ENCODE measurements at regions of chr6 and their contacts with region 1.

Region 1: DNA sequence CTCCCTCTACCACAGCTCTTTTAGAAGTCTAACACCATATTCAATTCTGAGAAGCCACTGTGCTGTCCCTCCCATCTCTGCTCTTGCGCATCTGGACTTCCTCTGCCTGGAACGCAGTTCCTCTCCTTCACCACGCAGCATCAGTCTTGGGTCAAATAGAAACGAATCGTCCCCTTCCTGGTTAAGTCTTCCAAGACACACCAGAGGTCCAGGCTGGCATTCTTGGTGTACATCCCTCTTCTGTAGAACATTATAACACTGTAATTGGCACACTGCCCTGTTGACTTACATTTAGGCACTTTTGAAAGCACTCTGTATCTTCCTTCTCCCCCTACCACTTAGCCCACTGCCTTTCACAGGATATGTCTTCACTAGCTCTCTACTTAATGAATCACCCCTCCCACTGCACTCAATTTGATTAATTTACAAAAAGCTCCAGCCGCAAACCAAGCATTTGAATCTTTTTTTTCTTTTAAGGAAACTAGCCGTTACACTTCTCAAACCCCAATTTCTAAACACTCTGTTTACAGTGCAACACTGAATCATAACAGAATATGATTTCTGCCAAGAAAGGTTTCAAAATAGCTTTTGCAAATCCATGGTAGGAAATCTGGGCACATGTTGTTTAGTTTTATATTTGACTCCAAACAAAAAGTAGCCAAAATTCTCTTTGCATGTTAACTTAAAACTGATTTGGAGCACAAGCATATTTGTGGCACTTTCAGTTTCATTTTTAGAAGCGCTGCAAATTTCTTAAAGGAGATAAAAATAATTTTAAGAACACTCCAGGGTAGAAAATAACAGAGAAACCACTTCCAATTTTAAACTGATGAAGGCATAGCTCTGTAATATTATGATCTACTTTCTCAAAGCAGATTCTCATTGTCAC is 140.7 kb upstream of the CARMIL1 start:
- DNase-seq: peak; percentile 14 to 67 (median 60)
- ATAC-seq: peak; percentile 94
- H3K4me3 ChIP-seq: peak overlapping the region; percentile 61
- H3K4me3 Mint-ChIP-seq: peak overlapping the region; percentile 84 to 98 (median 92)
- H3K27ac ChIP-seq: peak overlapping the region; percentile 76
- H3K27ac Mint-ChIP-seq: peak overlapping the region; percentile 87 to 97 (median 96)
- H3K4me1 ChIP-seq: peaks cover 12 to 16% of the 10 kb centered on the region in 2 donors
- H3K4me1 Mint-ChIP-seq: peaks cover 22 to 45% (median 27%) of the 10 kb centered on the region in 7 donors
- H3K27me3 ChIP-seq: no peaks in the 10 kb centered on the region
- H3K27me3 Mint-ChIP-seq: no peaks in the 10 kb centered on the region

Region 2: GRCh38 chr6:24402697-24403501 is 735.6 kb before region 1 on chr6 and contains the start of gene MRS2:
- CTCF ChIA-PET with region 1: no interaction called
- POLR2A ChIA-PET with region 1: no interaction called
- intact Hi-C with region 1: loop called in 1 of 2 experiments (anchors 5 kb)
- DNase-seq: peak; percentile 65 to 81 (median 78)
- ATAC-seq: peak; percentile 96
- H3K4me3 ChIP-seq: peak within 1 kb of the TSS; percentile 97
- H3K4me3 Mint-ChIP-seq: peak within 1 kb of the TSS; percentile 92 to 99 (median 96)
- H3K27ac ChIP-seq: peak within 1 kb of the TSS; percentile 64
- H3K27ac Mint-ChIP-seq: peak within 1 kb of the TSS; percentile 58 to 96 (median 90)
- H3K4me1 ChIP-seq: peaks cover 4 to 9% of the 10 kb centered on the region in 2 donors
- H3K4me1 Mint-ChIP-seq: peaks cover 10 to 35% (median 30%) of the 10 kb centered on the region in 7 donors
- H3K27me3 ChIP-seq: no peaks in the 10 kb centered on the region
- H3K27me3 Mint-ChIP-seq: peaks cover 17 to 25% (median 23%) of the 10 kb centered on the region in 5 donors
- total RNA-seq, gene MRS2: 6.7 to 28.0 (median 23.1) TPM

Region 3: GRCh38 chr6:25042036-25042521 is 96.4 kb before region 1 on chr6:
- CTCF ChIA-PET with region 1: no interaction called
- POLR2A ChIA-PET with region 1: interaction called, 3 read pairs
- intact Hi-C with region 1: loop called in 1 of 2 experiments (anchors 5 kb)
- DNase-seq: peak in 7 of 9 donors; percentile 45 to 67 (median 49)
- ATAC-seq: peak; percentile 73
- H3K4me3 ChIP-seq: peak overlapping the region; percentile 60
- H3K4me3 Mint-ChIP-seq: peak overlapping the region; percentile 88 to 97 (median 92)
- H3K27ac ChIP-seq: peak overlapping the region; percentile 64
- H3K27ac Mint-ChIP-seq: peak overlapping the region; percentile 71 to 98 (median 90)
- H3K4me1 ChIP-seq: peaks cover 35 to 51% of the 10 kb centered on the region in 2 donors
- H3K4me1 Mint-ChIP-seq: peaks cover 38 to 62% (median 56%) of the 10 kb centered on the region in 7 donors
- H3K27me3 ChIP-seq: no peaks in the 10 kb centered on the region
- H3K27me3 Mint-ChIP-seq: peaks cover 0 to 3% (median 0%) of the 10 kb centered on the region in 5 donors

Region 4: DNA sequence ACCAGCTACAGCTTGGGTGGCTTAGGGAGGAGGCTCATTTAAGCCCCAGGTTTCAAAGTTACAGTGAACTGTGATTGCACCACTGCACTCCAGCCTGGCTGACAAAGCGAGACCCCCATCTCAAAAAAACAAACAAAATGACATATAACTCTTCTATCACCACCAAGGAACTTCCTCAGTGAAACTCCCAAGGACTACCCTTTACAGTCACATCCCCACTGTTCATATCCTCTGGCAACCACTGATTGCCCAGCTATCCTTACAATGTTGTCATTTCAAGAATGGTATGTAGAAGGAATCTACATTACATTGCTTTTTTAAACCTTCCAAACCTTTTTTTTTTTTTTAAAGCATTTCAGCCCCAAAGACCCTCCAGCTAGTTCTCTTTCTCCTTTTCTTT is 17.6 kb after region 1 on chr6:
- CTCF ChIA-PET with region 1: no interaction called
- POLR2A ChIA-PET with region 1: no interaction called
- intact Hi-C with region 1: no loop called
- DNase-seq: no peak
- ATAC-seq: no peak
- H3K4me3 ChIP-seq: no peak overlapping the region
- H3K4me3 Mint-ChIP-seq: peak overlapping the region in 1 of 10 donors; percentile 1
- H3K27ac ChIP-seq: no peak overlapping the region
- H3K27ac Mint-ChIP-seq: peak overlapping the region in 2 of 9 donors; percentile 3 to 33
- H3K4me1 ChIP-seq: no peaks in the 10 kb centered on the region
- H3K4me1 Mint-ChIP-seq: peaks cover 0 to 48% (median 0%) of the 10 kb centered on the region in 7 donors
- H3K27me3 ChIP-seq: no peaks in the 10 kb centered on the region
- H3K27me3 Mint-ChIP-seq: peaks cover 0 to 12% (median 5%) of the 10 kb centered on the region in 5 donors

Region 5: DNA sequence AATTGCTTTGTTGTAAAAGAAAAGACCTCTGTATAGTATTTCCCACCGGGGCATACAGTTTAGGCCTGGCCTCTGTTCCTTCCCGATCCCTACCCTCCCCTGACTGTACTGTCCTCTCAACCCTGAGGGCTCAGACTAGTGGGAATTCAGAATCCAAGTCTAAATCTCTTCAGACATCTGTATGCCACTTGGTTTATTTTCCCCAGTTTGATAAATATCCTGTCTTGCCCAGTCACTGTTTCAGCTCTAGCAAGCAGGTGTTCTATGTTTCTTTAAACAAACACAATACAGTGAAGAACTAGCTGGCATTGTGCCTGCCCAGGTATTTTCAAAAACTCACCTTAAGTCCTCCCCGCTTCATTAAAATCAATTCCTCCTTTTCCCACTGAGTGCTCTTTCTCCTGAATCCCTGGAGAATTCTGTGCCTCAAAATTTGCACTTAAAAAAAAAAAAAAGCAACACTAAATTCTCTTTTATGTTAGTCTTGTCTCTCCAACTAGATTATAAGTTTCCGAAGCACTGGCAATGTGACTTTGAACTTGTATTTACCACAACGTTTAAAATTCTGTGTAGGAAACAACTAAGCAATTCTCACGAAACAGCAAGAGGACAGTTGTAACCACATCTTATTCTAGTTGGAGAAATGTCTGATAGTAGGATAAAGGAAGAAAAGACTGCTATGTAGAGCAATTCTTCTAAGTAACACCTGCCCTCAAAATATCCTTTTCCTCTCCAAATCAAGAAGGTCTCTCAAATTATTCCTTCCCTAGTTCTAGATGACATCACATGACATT is 28.7 kb after region 1 on chr6:
- CTCF ChIA-PET with region 1: no interaction called
- POLR2A ChIA-PET with region 1: interaction called, 3 read pairs
- intact Hi-C with region 1: loop called in 1 of 2 experiments (anchors 1 kb)
- DNase-seq: no peak
- ATAC-seq: no peak
- H3K4me3 ChIP-seq: no peak overlapping the region
- H3K4me3 Mint-ChIP-seq: peak overlapping the region in 2 of 10 donors; percentile 3 to 82
- H3K27ac ChIP-seq: no peak overlapping the region
- H3K27ac Mint-ChIP-seq: peak overlapping the region in 1 of 9 donors; percentile 92
- H3K4me1 ChIP-seq: no peaks in the 10 kb centered on the region
- H3K4me1 Mint-ChIP-seq: peaks cover 0 to 76% (median 20%) of the 10 kb centered on the region in 7 donors
- H3K27me3 ChIP-seq: no peaks in the 10 kb centered on the region
- H3K27me3 Mint-ChIP-seq: peaks cover 0 to 9% (median 0%) of the 10 kb centered on the region in 5 donors

Region 6: DNA sequence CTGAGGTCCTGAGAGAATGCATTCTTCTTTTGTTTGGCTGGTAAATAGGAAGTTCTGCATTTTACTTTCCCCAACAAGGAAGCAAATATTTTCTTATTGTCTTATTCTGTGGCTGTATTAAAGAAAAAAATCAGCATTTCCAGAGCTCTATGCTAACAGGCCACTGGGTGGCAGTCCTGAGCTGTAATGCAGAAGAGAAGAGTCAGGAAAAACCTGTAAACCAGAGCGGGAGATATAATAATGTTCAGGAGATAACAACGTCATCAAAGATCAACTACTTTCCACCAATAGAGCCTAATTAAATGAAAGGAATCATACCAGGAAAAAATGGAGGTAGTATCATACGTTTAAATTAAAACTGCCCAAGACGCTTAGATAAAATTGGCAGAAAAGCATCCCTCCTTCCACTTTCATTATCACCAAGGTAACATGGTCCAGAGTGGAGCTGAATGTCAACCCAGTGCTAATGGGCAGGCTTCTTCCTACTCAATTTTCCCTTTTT is 85.1 kb after region 1 on chr6:
- CTCF ChIA-PET with region 1: no interaction called
- POLR2A ChIA-PET with region 1: no interaction called
- intact Hi-C with region 1: loop called in 1 of 2 experiments (anchors 2 kb)
- DNase-seq: peak; percentile 32 to 63 (median 58)
- ATAC-seq: peak; percentile 78
- H3K4me3 ChIP-seq: peak overlapping the region; percentile 16
- H3K4me3 Mint-ChIP-seq: peak overlapping the region; percentile 31 to 85 (median 67)
- H3K27ac ChIP-seq: no peak overlapping the region
- H3K27ac Mint-ChIP-seq: no peak overlapping the region
- H3K4me1 ChIP-seq: peaks cover 0 to 6% of the 10 kb centered on the region in 2 donors
- H3K4me1 Mint-ChIP-seq: peaks cover 9 to 14% (median 11%) of the 10 kb centered on the region in 7 donors
- H3K27me3 ChIP-seq: no peaks in the 10 kb centered on the region
- H3K27me3 Mint-ChIP-seq: peaks cover 0 to 22% (median 8%) of the 10 kb centered on the region in 5 donors

Region 7: GRCh38 chr6:25404693-25405169 is 266.2 kb after region 1 on chr6:
- CTCF ChIA-PET with region 1: no interaction called
- POLR2A ChIA-PET with region 1: no interaction called
- intact Hi-C with region 1: loop called in 1 of 2 experiments (anchors 5 kb)
- DNase-seq: peak; percentile 12 to 74 (median 56)
- ATAC-seq: peak; percentile 90
- H3K4me3 ChIP-seq: peak overlapping the region; percentile 44
- H3K4me3 Mint-ChIP-seq: peak overlapping the region in 1 of 10 donors; percentile 81
- H3K27ac ChIP-seq: peak overlapping the region; percentile 71
- H3K27ac Mint-ChIP-seq: no peak overlapping the region
- H3K4me1 ChIP-seq: peaks cover 16 to 41% of the 10 kb centered on the region in 2 donors
- H3K4me1 Mint-ChIP-seq: peaks cover 3 to 39% (median 26%) of the 10 kb centered on the region in 7 donors
- H3K27me3 ChIP-seq: no peaks in the 10 kb centered on the region
- H3K27me3 Mint-ChIP-seq: no peaks in the 10 kb centered on the region

Measured in naive thymus-derived CD4-positive, alpha-beta T cell (primary cell).